Activated B cell treated with CpG ODN at 0.5 μM for 24 hours (primary cell): ENCODE measurements at regions of chr1 and their contacts with region 1.

Region 1: GRCh38 chr1:150621497-150622302 is 7.7 kb downstream of the ENSA start:
- DNase-seq: no peak
- ATAC-seq: peak; percentile 82
- H3K4me3 Mint-ChIP-seq: peak overlapping the region; percentile 28
- H3K27ac Mint-ChIP-seq: peak overlapping the region; percentile 82
- H3K4me1 Mint-ChIP-seq: peaks cover 36% of the 10 kb centered on the region
- H3K27me3 Mint-ChIP-seq: no peaks in the 10 kb centered on the region
- CTCF ChIP-seq: no peak

Region 2: DNA sequence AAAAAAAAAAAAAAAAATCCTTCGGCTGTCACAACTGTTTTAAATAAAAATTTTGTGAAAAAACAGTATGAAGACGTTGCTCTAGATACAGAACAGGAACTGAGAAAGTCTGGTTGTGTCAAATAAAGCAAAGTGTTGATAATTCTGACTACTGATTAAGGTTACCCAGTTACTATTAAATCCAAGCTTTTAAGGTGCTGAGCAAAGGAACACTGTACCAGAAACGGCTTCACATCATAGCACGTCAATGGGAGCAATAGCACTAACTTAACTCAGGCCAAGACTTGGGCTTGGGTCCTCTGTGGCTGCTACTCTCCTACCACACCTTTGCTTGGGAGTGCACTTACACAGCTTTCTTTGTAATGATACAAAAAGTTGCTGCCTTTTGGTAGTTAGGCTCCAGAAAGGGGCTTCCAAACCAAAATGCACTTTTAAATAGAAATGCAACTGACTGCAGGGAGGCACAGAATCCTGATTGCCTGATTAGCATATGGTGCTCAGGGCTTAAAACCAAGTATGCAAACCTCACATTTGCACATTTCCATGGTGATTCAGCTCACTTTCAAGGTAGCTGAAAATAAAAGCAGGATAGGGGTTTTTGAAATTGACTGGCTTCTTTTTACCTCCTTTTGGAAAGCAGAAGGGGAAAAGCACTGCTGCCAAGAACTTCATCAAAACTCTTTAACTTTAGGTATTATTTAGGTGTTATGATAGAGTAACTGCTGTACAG is 48.6 kb before region 1 on chr1:
- CTCF ChIA-PET with region 1: interaction called, 358 read pairs
- POLR2A ChIA-PET with region 1: interaction called, 189 read pairs
- intact Hi-C with region 1: no loop called
- DNase-seq: no peak
- ATAC-seq: peak; percentile 60
- H3K4me3 Mint-ChIP-seq: peak overlapping the region; percentile 70
- H3K27ac Mint-ChIP-seq: peak overlapping the region; percentile 88
- H3K4me1 Mint-ChIP-seq: peaks cover 90% of the 10 kb centered on the region
- H3K27me3 Mint-ChIP-seq: no peaks in the 10 kb centered on the region
- CTCF ChIP-seq: no peak

Region 3: DNA sequence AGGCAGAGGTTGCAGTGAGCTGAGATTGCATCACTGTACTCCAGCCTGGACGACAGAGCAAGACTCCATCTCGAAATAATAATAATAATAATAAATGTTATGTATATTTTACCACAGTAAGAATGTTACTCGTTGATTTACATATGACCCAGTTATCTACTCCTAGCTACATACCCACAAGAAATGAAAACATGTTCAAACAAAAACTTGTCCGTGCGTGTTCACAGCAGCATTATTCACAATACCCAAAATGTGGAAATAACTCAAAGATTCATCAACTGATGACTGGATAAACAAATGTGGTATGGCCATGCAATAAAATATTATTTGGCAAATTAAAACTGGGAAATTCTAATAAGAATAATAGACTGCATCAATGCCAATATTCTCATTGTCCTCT is 39.5 kb after region 1 on chr1:
- CTCF ChIA-PET with region 1: no interaction called
- POLR2A ChIA-PET with region 1: interaction called, 13 read pairs
- intact Hi-C with region 1: no loop called
- DNase-seq: no peak
- ATAC-seq: no peak
- H3K4me3 Mint-ChIP-seq: no peak overlapping the region
- H3K27ac Mint-ChIP-seq: no peak overlapping the region
- H3K4me1 Mint-ChIP-seq: peaks cover 7% of the 10 kb centered on the region
- H3K27me3 Mint-ChIP-seq: no peaks in the 10 kb centered on the region
- CTCF ChIP-seq: no peak